HepG2 (cell line): ENCODE measurements at regions of chr7 and their contacts with region 1.

Region 1: GRCh38 chr7:43808135-43808809 is 49.8 kb downstream of the BLVRA start:
- DNase-seq: no peak
- ATAC-seq: no peak
- H3K4me3 ChIP-seq: no peak overlapping the region
- H3K27ac ChIP-seq: no peak overlapping the region
- H3K4me1 ChIP-seq: no peaks in the 10 kb centered on the region
- H3K27me3 ChIP-seq: no peaks in the 10 kb centered on the region
- CTCF ChIP-seq: no peak
- EP300 ChIP-seq: no peak
- POLR2A ChIP-seq: no peak
- RAD21 ChIP-seq: no peak

Region 2: GRCh38 chr7:42071372-42072261 is 1736.7 kb before region 1 on chr7:
- CTCF ChIA-PET with region 1: no interaction called
- POLR2A ChIA-PET with region 1: no interaction called
- in situ Hi-C with region 1: no loop called
- intact Hi-C with region 1: no loop called
- DNase-seq: no peak
- ATAC-seq: peak; percentile 72
- H3K4me3 ChIP-seq: no peak overlapping the region
- H3K27ac ChIP-seq: no peak overlapping the region
- H3K4me1 ChIP-seq: no peaks in the 10 kb centered on the region
- H3K27me3 ChIP-seq: peaks cover 0 to 4% of the 10 kb centered on the region in 2 experiments; a peak in 2 of 5 replicates
- CTCF ChIP-seq: no peak
- EP300 ChIP-seq: no peak
- POLR2A ChIP-seq: no peak
- RAD21 ChIP-seq: no peak

Region 3: GRCh38 chr7:43721193-43721806 is 87.0 kb before region 1 on chr7:
- CTCF ChIA-PET with region 1: interaction called, 7 read pairs
- POLR2A ChIA-PET with region 1: no interaction called
- in situ Hi-C with region 1: no loop called
- intact Hi-C with region 1: loop called (anchors 2 kb)
- DNase-seq: peak; percentile 39
- ATAC-seq: no peak
- H3K4me3 ChIP-seq: no peak overlapping the region
- H3K27ac ChIP-seq: no peak overlapping the region
- H3K4me1 ChIP-seq: peaks cover 12% of the 10 kb centered on the region
- H3K27me3 ChIP-seq: no peaks in the 10 kb centered on the region
- CTCF ChIP-seq: peak; percentile 55
- EP300 ChIP-seq: no peak
- POLR2A ChIP-seq: no peak
- RAD21 ChIP-seq: no peak

Region 4: GRCh38 chr7:43758029-43758821 is 50.0 kb before region 1 on chr7 and contains the start of gene BLVRA:
- CTCF ChIA-PET with region 1: no interaction called
- POLR2A ChIA-PET with region 1: no interaction called
- in situ Hi-C with region 1: no loop called
- intact Hi-C with region 1: loop called (anchors 5 kb)
- DNase-seq: peak; percentile 37
- ATAC-seq: peak; percentile 88
- H3K4me3 ChIP-seq: peak within 1 kb of the TSS; percentile 75 to 91 (median 82)
- H3K27ac ChIP-seq: peak within 1 kb of the TSS; percentile 60
- H3K4me1 ChIP-seq: peaks cover 58% of the 10 kb centered on the region
- H3K27me3 ChIP-seq: no peaks in the 10 kb centered on the region; a peak in 1 of 5 replicates
- CTCF ChIP-seq: no peak
- EP300 ChIP-seq: no peak
- POLR2A ChIP-seq: peak; percentile 20 to 87; a peak in 2 of 4 replicates
- RAD21 ChIP-seq: no peak
- total RNA-seq, gene BLVRA: 64.2 and 95.5 TPM in 2 replicates

Region 5: DNA sequence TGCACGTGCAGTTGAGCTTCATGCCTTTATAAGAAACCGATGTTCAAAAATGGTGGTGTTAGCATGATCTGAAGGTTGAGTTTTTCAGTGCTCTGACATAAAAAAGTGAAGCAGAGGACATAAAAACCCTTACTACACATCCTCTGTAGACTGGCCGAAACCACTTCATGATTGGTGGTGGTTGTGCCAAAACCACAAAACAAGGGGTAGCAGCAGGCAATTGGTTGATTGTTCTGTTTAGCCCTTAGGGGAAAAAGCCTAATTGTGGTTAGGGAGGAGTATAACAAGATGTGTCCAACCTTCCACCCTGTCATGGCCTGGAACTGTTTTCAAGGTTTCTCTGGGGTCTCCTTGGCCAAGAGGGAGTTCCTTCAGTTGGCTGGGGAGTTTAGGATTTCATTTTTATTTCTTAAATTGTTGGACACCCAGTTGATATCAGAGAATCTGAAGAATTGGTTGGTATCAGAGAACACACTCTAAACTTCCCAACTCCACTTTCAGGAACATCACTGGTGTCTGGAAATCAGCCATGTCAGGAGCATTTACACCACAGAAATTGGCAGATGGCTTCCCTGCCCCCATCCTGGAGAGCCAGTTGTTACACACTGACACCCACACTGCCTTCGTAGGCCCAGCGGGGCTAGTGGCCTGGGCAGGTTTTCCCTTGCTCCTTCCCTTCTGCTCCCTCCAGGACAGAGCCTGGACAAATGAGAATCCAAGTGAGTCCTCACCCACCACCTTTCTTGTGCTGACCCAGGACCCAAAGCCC is 42.3 kb after region 1 on chr7:
- CTCF ChIA-PET with region 1: no interaction called
- POLR2A ChIA-PET with region 1: no interaction called
- in situ Hi-C with region 1: no loop called
- intact Hi-C with region 1: no loop called
- DNase-seq: no peak
- ATAC-seq: no peak
- H3K4me3 ChIP-seq: no peak overlapping the region
- H3K27ac ChIP-seq: no peak overlapping the region
- H3K4me1 ChIP-seq: no peaks in the 10 kb centered on the region
- H3K27me3 ChIP-seq: no peaks in the 10 kb centered on the region; a peak in 1 of 5 replicates
- CTCF ChIP-seq: no peak
- EP300 ChIP-seq: no peak
- POLR2A ChIP-seq: no peak
- RAD21 ChIP-seq: no peak